Endothelial cell of umbilical vein (primary cell): ENCODE measurements at regions of chr6 and their contacts with region 1.

Region 1: DNA sequence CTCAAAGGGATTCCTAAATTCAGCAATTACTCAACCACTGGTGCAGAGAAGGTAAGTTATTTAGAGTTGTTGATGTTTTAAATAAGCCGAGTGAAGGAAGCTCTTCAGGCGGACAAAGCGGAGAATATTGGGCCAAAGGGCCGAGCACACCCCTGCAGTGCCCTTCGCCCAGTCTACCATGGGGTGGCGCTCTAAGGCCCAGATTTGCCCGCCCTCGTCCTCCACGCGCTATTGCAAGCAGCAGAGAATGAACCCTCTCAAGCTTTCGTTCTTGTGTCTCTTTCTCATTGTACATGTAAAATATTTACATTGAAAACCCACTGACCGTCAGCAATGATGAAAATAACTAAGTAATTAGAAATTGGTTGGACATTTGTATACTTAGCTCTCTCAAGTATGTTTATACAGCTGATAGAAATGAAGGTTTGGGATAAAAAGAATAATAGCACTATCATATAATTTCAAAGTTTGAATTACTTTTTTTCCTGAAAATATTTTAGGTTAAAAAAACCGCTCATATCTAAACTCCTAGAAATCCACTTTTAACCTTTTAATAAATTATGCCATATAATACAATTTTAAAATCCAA is 195.0 kb upstream of the CEP162 start:
- DNase-seq: peak; percentile 77
- H3K4me3 ChIP-seq: no peak overlapping the region
- H3K27ac ChIP-seq: no peak overlapping the region
- H3K4me1 ChIP-seq: no peaks in the 10 kb centered on the region
- H3K27me3 ChIP-seq: no peaks in the 10 kb centered on the region
- CTCF ChIP-seq: peak; percentile 93 to 95
- POLR2A ChIP-seq: no peak

Region 2: GRCh38 chr6:84353459-84354423 is 68.7 kb before region 1 on chr6:
- CTCF ChIA-PET with region 1: no interaction called
- POLR2A ChIA-PET with region 1: no interaction called
- dilution Hi-C with region 1: no loop called
- intact Hi-C with region 1: no loop called
- DNase-seq: no peak
- H3K4me3 ChIP-seq: no peak overlapping the region
- H3K27ac ChIP-seq: no peak overlapping the region
- H3K4me1 ChIP-seq: no peaks in the 10 kb centered on the region
- H3K27me3 ChIP-seq: peaks cover 2 to 10% of the 10 kb centered on the region in 2 experiments
- CTCF ChIP-seq: no peak
- POLR2A ChIP-seq: no peak

Region 3: GRCh38 chr6:84466511-84466910 is 44.0 kb after region 1 on chr6:
- CTCF ChIA-PET with region 1: interaction called, 18 read pairs
- POLR2A ChIA-PET with region 1: no interaction called
- dilution Hi-C with region 1: no loop called
- intact Hi-C with region 1: no loop called
- DNase-seq: peak; percentile 93
- H3K4me3 ChIP-seq: no peak overlapping the region
- H3K27ac ChIP-seq: peak overlapping the region; percentile 44
- H3K4me1 ChIP-seq: peaks cover 31% of the 10 kb centered on the region
- H3K27me3 ChIP-seq: no peaks in the 10 kb centered on the region
- CTCF ChIP-seq: no peak
- POLR2A ChIP-seq: no peak

Region 4: DNA sequence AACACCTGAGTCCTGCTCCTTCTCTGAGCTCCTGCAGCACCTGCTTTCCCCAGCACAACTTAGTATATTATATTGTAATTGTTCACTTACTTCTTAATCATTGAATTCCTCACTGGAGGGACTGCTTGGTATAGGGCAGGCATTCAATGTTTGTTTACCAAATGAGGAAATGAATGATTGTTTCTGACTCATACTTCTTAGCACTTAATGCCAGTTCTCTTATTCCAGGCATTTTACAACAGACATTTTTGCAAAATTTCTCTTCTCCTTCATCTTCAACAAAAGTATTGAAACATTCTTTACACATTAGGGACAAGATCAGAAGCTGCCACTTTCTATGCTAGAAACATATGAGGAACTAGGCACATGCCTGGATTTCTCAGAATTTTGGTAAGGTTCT is 222.5 kb after region 1 on chr6:
- CTCF ChIA-PET with region 1: interaction called, 21 read pairs
- POLR2A ChIA-PET with region 1: no interaction called
- dilution Hi-C with region 1: no loop called
- intact Hi-C with region 1: no loop called
- DNase-seq: peak; percentile 87
- H3K4me3 ChIP-seq: peak overlapping the region in 1 of 3 experiments; percentile 57
- H3K27ac ChIP-seq: peak overlapping the region; percentile 97
- H3K4me1 ChIP-seq: peaks cover 54% of the 10 kb centered on the region
- H3K27me3 ChIP-seq: no peaks in the 10 kb centered on the region
- CTCF ChIP-seq: no peak
- POLR2A ChIP-seq: no peak

Region 5: DNA sequence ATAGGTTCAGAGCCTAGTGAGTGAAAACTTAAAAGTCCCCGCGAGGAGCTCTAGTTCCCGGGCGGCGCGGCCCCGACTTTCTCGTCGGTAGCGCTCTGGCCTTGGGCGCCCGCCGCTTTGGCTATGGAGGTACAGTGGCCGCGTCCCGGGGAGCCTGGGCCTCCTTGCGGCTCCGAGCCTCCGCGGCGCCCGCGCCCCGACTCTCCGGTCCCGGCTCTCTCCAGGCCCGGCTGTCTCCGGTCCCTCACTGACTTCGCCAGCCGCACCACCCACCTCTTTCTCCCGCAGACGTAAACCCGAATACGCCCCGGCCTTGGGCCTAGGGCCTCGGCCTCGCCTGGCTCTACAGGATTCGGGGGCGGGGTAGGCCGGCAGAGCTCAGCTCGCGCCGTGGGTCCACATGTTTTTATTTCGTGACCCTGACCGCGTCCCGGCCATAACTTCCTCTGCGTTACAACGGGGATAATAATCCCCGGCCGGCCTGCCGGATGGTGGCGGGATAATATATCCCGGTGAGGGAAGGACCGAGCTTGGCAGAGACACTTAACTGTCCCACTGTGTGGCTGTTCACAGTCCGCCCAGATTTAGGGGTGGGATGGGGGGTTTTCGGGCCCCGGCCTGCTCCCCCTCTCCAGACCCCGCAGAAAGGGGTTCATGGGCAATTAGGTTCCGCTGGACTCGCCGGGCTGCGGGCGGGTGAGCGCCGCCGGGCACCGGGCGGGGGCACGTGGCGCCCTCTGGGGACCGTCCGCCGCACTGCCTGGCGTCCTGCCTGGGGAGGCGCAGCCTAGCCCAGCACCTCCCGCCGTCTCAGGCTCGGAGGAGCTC is 351.9 kb after region 1 on chr6:
- CTCF ChIA-PET with region 1: interaction called, 170 read pairs
- POLR2A ChIA-PET with region 1: no interaction called
- dilution Hi-C with region 1: no loop called
- intact Hi-C with region 1: loop called (anchors 1 kb)
- DNase-seq: peak; percentile 79
- H3K4me3 ChIP-seq: peak overlapping the region; percentile 52 to 55 (median 54)
- H3K27ac ChIP-seq: no peak overlapping the region
- H3K4me1 ChIP-seq: peaks cover 15% of the 10 kb centered on the region
- H3K27me3 ChIP-seq: peaks cover 30 to 76% of the 10 kb centered on the region in 2 experiments
- CTCF ChIP-seq: peak; percentile 79 to 85
- POLR2A ChIP-seq: peak; percentile 35

Region 6: DNA sequence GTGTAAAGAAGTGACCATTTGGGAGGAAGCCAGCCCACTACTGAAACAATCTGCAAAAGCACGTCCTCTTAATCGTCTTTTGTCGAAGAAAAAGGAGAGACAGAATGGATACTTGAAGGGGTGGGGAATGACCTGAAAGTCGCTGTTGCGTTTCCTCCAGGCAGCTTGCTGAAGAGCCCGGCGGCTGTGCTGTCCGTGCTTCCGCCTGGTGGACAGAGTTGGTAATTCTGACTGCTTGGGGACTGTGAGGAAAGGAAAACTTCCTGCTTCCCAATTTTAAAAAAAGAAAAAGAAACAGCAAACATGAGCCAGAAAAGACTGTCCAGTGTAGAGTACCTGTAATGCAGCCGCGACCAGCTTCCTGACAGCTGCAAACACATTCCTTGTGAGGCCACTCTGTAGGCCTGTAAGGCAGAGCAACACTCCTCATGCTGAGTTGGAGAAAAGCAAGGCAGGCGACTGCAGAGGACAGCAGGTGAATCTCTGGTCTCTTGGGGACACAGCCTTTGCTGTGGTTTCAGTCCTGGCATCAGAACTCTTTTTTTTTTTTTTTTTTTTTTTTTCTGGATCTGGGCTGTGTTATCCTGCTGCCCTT is 593.0 kb after region 1 on chr6:
- CTCF ChIA-PET with region 1: interaction called, 7 read pairs
- POLR2A ChIA-PET with region 1: no interaction called
- dilution Hi-C with region 1: no loop called
- intact Hi-C with region 1: loop called (anchors 1 kb)
- DNase-seq: peak; percentile 83
- H3K4me3 ChIP-seq: no peak overlapping the region
- H3K27ac ChIP-seq: no peak overlapping the region
- H3K4me1 ChIP-seq: no peaks in the 10 kb centered on the region
- H3K27me3 ChIP-seq: peaks cover 9% of the 10 kb centered on the region in 2 experiments
- CTCF ChIP-seq: peak; percentile 80 to 82
- POLR2A ChIP-seq: no peak